Panc1 (cell line): ENCODE measurements at regions of chr9 and their contacts with region 1.

Region 1: DNA sequence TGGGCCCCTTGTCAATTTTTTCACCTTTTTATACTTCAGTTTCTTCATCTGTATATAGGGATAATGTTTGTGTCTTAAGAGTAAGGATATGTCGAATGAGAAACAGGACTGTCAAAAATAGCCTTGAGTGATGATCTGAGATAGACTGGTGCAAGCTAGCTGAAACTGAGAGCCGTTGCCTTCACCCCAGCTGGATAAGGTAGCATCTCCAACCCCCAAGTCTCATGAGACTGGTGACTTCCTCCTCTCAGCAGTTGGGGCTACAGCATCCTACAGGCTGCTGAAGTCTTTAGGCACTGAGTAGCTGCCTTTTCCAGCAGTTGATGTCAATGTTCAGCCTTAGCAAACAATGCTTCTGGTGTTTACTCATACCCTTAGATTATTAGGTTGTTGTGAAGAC is 330.2 kb downstream of the OSTF1 start:
- DNase-seq: no peak
- ATAC-seq: no peak
- H3K4me3 ChIP-seq: no peak overlapping the region
- H3K27ac ChIP-seq: no peak overlapping the region
- H3K4me1 ChIP-seq: no peaks in the 10 kb centered on the region
- H3K27me3 ChIP-seq: no peaks in the 10 kb centered on the region
- CTCF ChIP-seq: no peak

Region 2: GRCh38 chr9:76004526-76004925 is 586.0 kb after region 1 on chr9:
- CTCF ChIA-PET with region 1: no interaction called
- POLR2A ChIA-PET with region 1: interaction called, 11 read pairs
- in situ Hi-C with region 1: no loop called
- intact Hi-C with region 1: no loop called
- DNase-seq: no peak
- ATAC-seq: no peak
- H3K4me3 ChIP-seq: no peak overlapping the region
- H3K27ac ChIP-seq: no peak overlapping the region
- H3K4me1 ChIP-seq: no peaks in the 10 kb centered on the region
- H3K27me3 ChIP-seq: no peaks in the 10 kb centered on the region
- CTCF ChIP-seq: no peak